HCT116 (cell line): ENCODE measurements at regions of chr2 and their contacts with region 1.

Region 1: GRCh38 chr2:61255580-61256437 is 93.8 kb downstream of the C2orf74 start:
- DNase-seq: no peak
- ATAC-seq: no peak; the same call in 1 of the 2 replicates
- H3K4me3 ChIP-seq: no peak overlapping the region
- H3K27ac ChIP-seq: no peak overlapping the region
- H3K4me1 ChIP-seq: no peaks in the 10 kb centered on the region
- H3K27me3 ChIP-seq: no peaks in the 10 kb centered on the region
- CTCF ChIP-seq: no peak
- POLR2A ChIP-seq: no peak
- RAD21 ChIP-seq: no peak

Region 2: GRCh38 chr2:60116161-60116875 is 1139.5 kb before region 1 on chr2:
- CTCF ChIA-PET with region 1: no interaction called
- POLR2A ChIA-PET with region 1: no interaction called
- RAD21 ChIA-PET with region 1: no interaction called
- intact Hi-C with region 1: no loop called
- DNase-seq: no peak
- ATAC-seq: no peak
- H3K4me3 ChIP-seq: no peak overlapping the region
- H3K27ac ChIP-seq: no peak overlapping the region
- H3K4me1 ChIP-seq: no peaks in the 10 kb centered on the region
- H3K27me3 ChIP-seq: no peaks in the 10 kb centered on the region; the same call in 1 of the 2 replicates
- CTCF ChIP-seq: no peak
- POLR2A ChIP-seq: no peak
- RAD21 ChIP-seq: no peak

Region 3: GRCh38 chr2:61238219-61239012 is 17.4 kb before region 1 on chr2:
- CTCF ChIA-PET with region 1: no interaction called
- POLR2A ChIA-PET with region 1: no interaction called
- RAD21 ChIA-PET with region 1: no interaction called
- intact Hi-C with region 1: loop called (anchors 2 kb)
- DNase-seq: no peak
- ATAC-seq: no peak
- H3K4me3 ChIP-seq: no peak overlapping the region
- H3K27ac ChIP-seq: no peak overlapping the region
- H3K4me1 ChIP-seq: no peaks in the 10 kb centered on the region
- H3K27me3 ChIP-seq: no peaks in the 10 kb centered on the region
- CTCF ChIP-seq: no peak
- POLR2A ChIP-seq: no peak
- RAD21 ChIP-seq: no peak

Region 4: DNA sequence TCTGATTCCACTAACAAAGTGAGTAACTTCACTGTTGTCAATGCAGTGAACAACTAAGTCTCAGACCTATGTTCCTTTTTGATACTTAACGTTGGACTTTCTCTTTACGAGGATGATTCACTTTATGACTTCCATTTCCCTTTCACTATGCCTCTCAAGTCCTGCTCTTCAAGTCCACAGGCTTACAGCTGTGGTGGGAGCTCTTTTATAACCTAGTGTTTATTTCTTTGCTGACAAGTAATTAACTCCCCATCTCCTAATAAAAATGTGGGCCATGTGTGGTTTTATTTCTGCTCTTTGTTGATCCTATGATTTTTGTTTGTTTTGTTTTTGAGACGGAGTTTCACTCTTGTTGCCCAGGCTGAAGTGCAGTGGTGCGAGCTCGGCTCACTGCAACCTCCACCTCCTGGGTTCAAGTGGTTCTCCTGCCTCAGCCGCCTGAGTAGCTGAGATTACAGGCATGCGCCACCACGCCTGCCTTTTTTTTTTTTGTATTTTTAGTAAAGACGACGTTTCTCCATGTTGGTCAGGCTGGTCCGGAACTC is 73.0 kb after region 1 on chr2:
- CTCF ChIA-PET with region 1: no interaction called
- POLR2A ChIA-PET with region 1: interaction called, 3 read pairs
- RAD21 ChIA-PET with region 1: no interaction called
- intact Hi-C with region 1: loop called (anchors 1 kb)
- DNase-seq: peak; percentile 12
- ATAC-seq: peak; percentile 20; the same call in 1 of the 2 replicates
- H3K4me3 ChIP-seq: no peak overlapping the region
- H3K27ac ChIP-seq: no peak overlapping the region
- H3K4me1 ChIP-seq: peaks cover 0 to 4% of the 10 kb centered on the region in 2 experiments; a peak in 1 of 4 replicates
- H3K27me3 ChIP-seq: no peaks in the 10 kb centered on the region
- CTCF ChIP-seq: no peak
- POLR2A ChIP-seq: no peak
- RAD21 ChIP-seq: no peak